ENCODE measurements at regions of chr10 and their contacts with region 1.

Region 1: DNA sequence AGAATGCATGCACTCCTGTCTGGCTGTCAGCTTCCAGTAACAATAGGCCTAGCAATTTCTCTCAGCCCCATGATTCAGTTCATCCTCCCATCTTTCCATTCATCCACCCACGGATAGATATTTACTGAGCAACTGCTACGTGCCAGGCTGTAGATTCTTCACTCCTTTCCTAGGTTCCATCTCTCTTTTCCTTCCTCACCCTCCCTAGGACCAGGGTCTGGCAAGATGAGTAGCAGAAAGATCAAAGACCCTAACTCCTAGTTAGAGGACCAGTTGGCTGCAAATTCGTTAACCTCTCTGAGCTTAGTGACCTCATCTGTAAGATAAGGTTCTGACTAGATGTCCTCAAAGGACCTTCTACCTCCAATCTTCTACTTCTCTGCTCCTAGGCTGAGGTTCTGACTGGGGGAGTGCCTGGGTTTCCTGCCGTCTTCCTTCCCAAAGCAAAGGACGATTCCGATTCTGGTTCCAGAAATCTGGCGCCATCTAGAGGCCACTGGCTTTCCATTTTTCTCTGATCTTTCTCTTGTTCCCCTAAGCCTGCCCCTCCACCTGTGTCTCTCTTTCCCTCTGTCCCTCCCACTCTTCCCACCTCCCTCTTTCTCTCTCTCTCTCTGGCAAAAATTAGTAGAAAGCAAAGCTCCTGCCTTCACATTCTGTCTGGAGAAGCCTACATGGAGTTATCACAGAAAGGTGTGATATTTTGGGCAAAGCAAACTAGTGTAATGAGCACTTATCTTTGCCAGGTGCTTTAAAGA is 26.2 kb downstream of the TBATA start:
- DNase-seq: peak; percentile 53 to 87
- H3K4me3 ChIP-seq: no peak overlapping the region
- H3K27ac ChIP-seq: no peak overlapping the region
- H3K4me1 ChIP-seq: peaks cover 0 to 18% (median 12%) of the 10 kb centered on the region in 4 experiments; a peak in 6 of 7 replicates
- H3K27me3 ChIP-seq: no peaks in the 10 kb centered on the region
- CTCF ChIP-seq: peak; percentile 36 to 74 (median 65); a peak in 3 of 4 replicates
- EP300 ChIP-seq: no peak
- POLR2A ChIP-seq: no peak
- RAD21 ChIP-seq: peak; percentile 78 to 80

Region 2: GRCh38 chr10:70558871-70559810 is 199.8 kb before region 1 on chr10:
- CTCF ChIA-PET with region 1: interaction called, 18 read pairs
- POLR2A ChIA-PET with region 1: no interaction called
- DNase-seq: peak in 1 of 2 experiments; percentile 80
- H3K4me3 ChIP-seq: no peak overlapping the region
- H3K27ac ChIP-seq: no peak overlapping the region
- H3K4me1 ChIP-seq: peaks cover 0 to 6% (median 3%) of the 10 kb centered on the region in 4 experiments; a peak in 4 of 7 replicates
- H3K27me3 ChIP-seq: no peaks in the 10 kb centered on the region
- CTCF ChIP-seq: peak in 2 of 3 experiments; percentile 44 to 62; a peak in 3 of 4 replicates
- EP300 ChIP-seq: no peak
- POLR2A ChIP-seq: no peak
- RAD21 ChIP-seq: peak; percentile 37 to 63; a peak in 3 of 4 replicates

Region 3: DNA sequence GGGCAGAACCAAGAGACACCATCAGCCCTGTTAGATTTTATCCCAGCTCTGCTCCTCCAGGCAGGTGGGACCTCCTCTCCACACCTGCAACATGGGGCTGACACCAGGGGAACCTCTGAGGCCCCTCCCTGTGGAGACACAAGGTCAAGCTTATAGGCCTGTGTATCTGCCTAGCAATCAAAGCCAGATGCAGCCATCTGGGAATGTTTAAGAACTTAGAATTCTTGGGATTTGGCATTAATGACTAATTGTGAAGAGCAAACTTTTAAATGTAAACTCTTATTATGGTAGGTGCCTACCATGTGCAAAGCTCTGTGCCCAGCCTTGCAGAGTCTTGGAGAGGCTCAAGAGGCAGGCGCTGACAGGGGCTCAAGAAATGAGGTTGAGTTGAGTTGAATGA is 25.9 kb before region 1 on chr10:
- CTCF ChIA-PET with region 1: interaction called, 11 read pairs
- POLR2A ChIA-PET with region 1: no interaction called
- DNase-seq: no peak
- H3K4me3 ChIP-seq: no peak overlapping the region
- H3K27ac ChIP-seq: no peak overlapping the region
- H3K4me1 ChIP-seq: peaks cover 0 to 6% (median 3%) of the 10 kb centered on the region in 4 experiments; a peak in 3 of 7 replicates
- H3K27me3 ChIP-seq: peaks cover 0 to 2% (median 0%) of the 10 kb centered on the region in 4 experiments; a peak in 1 of 7 replicates
- CTCF ChIP-seq: no peak
- EP300 ChIP-seq: no peak
- POLR2A ChIP-seq: no peak
- RAD21 ChIP-seq: no peak

Region 4: GRCh38 chr10:70747192-70747965 is 11.6 kb before region 1 on chr10:
- CTCF ChIA-PET with region 1: interaction called, 22 read pairs
- POLR2A ChIA-PET with region 1: no interaction called
- DNase-seq: no peak
- H3K4me3 ChIP-seq: no peak overlapping the region
- H3K27ac ChIP-seq: no peak overlapping the region
- H3K4me1 ChIP-seq: no peaks in the 10 kb centered on the region
- H3K27me3 ChIP-seq: no peaks in the 10 kb centered on the region
- CTCF ChIP-seq: no peak
- EP300 ChIP-seq: no peak
- POLR2A ChIP-seq: no peak
- RAD21 ChIP-seq: no peak

Region 5: DNA sequence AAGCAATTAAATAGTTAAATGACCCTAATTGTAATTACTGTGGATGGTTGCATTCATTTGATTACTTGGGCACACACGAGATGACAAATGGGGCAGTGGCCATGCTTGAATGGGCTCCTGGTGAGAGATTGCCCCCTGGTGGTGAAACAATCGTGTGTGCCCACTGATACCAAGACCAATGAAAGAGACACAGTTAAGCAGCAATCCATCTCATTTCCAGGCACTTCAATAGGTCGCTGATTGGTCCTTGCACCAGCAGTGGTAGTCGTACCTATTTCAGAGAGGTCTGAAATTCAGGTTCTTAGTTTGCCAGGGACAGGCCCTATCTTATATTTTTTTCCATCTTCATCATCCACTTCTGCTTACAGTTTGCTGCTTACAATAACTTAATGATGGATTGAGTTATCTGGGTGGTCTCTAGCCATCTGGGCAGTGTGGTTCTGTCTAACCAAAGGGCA is 121.2 kb after region 1 on chr10:
- CTCF ChIA-PET with region 1: interaction called, 11 read pairs
- POLR2A ChIA-PET with region 1: no interaction called
- DNase-seq: peak in 1 of 2 experiments; percentile 70
- H3K4me3 ChIP-seq: no peak overlapping the region
- H3K27ac ChIP-seq: no peak overlapping the region
- H3K4me1 ChIP-seq: peaks cover 0 to 7% (median 2%) of the 10 kb centered on the region in 4 experiments; a peak in 3 of 7 replicates
- H3K27me3 ChIP-seq: no peaks in the 10 kb centered on the region
- CTCF ChIP-seq: peak; percentile 70 to 87 (median 77)
- EP300 ChIP-seq: no peak
- POLR2A ChIP-seq: no peak
- RAD21 ChIP-seq: peak; percentile 88 to 93

Region 6: GRCh38 chr10:70925377-70926225 is 166.7 kb after region 1 on chr10:
- CTCF ChIA-PET with region 1: no interaction called
- POLR2A ChIA-PET with region 1: no interaction called
- DNase-seq: peak; percentile 17 to 91
- H3K4me3 ChIP-seq: no peak overlapping the region
- H3K27ac ChIP-seq: no peak overlapping the region
- H3K4me1 ChIP-seq: no peaks in the 10 kb centered on the region
- H3K27me3 ChIP-seq: no peaks in the 10 kb centered on the region; a peak in 1 of 7 replicates
- CTCF ChIP-seq: peak; percentile 89 to 95 (median 91)
- EP300 ChIP-seq: no peak
- POLR2A ChIP-seq: no peak
- RAD21 ChIP-seq: peak; percentile 95 to 96